Aorta (tissue), 5 donors: ENCODE measurements at regions of chr1 and their contacts with region 1.

Region 1: DNA sequence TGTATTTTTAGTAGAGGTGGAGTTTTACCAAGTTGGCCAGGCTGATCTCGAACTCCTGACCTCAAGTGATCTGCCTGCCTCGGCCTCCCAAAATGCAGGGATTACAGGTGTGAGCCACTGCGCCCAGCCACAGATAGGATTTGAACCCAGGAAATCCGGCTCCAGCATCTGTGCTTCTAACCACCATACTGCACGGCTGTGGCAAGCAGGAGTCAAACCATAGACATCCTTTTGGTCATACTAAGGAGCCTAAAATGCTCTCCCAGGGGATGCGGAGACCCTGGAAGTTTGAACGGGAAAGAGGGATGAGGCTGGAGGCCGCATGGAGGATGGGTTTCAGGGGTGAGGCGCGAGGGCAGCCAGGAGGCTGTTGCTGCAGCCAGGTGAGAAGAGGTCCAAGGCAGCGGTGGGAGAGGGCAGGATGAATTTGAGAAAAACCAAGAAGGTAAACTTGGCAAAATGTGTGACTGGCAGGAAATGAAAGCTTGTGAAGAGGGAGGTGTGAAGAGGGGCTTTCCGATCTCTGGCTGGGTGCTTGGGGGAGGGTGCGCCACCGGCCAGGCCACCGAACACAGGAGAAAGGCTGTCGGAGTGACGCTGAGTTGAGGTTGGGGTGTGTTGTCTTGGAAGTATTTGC is 24.0 kb upstream of the CDK18 start:
- DNase-seq: no peak
- ATAC-seq: no peak
- H3K4me3 ChIP-seq: no peak overlapping the region
- H3K27ac ChIP-seq: no peak overlapping the region
- H3K4me1 ChIP-seq: no peaks in the 10 kb centered on the region
- H3K27me3 ChIP-seq: peaks cover 0 to 2% of the 10 kb centered on the region in 2 donors

Region 2: GRCh38 chr1:205354259-205354904 is 126.1 kb before region 1 on chr1:
- intact Hi-C with region 1: loop called (anchors 1 to 5 kb)
- DNase-seq: peak; percentile 67 to 72
- ATAC-seq: peak; percentile 66
- H3K4me3 ChIP-seq: no peak overlapping the region
- H3K27ac ChIP-seq: no peak overlapping the region
- H3K4me1 ChIP-seq: no peaks in the 10 kb centered on the region
- H3K27me3 ChIP-seq: no peaks in the 10 kb centered on the region

Region 3: DNA sequence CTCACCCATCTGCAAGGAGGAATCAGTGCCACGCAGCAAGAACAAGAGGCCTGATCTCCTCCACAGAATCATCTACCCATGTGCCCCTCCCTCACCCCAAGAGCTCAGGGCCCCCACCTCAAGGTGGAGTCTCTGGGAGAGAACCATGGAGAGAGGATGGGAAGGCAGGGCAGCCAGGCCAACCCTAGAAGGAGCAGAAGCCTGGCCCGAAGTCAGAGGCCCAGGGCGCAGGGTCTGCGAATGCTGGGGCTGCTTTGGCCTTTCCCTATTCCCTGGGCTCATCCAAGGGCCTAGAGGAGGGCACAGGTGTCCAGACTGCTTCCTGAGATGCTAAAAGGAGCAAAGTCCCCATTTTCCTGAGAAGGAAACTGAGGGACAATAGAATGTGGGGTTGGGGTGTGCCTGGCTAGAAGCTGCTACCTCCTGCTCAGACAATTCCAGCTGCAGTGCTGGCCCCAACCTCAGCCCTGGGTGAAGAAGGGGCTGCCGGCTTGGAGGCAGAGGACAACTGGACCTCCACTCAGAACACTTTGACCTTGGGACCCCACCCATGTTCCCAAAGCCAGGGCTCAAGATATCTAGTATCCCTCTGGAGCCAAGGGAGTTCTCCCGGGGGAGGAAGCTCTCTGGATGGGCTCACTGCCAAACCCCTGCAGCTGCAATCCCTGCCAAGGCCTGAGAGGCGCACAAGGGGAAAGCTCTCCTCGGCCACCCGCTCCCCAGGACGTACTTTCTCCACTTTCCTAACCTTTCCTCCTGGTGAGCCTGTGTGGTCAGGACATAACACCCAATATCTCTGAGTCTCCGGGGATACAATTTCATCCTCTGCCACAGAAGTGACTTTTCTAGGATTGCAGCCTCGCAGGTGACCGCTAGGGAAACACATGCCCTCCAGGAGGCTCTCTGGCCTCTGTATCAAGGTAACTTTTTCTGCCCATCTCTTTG is 42.0 kb before region 1 on chr1:
- intact Hi-C with region 1: loop called in 1 of 2 experiments (anchors 5 kb)
- DNase-seq: peak; percentile 86 to 91
- ATAC-seq: peak; percentile 72
- H3K4me3 ChIP-seq: no peak overlapping the region
- H3K27ac ChIP-seq: no peak overlapping the region
- H3K4me1 ChIP-seq: no peaks in the 10 kb centered on the region
- H3K27me3 ChIP-seq: no peaks in the 10 kb centered on the region

Region 4: DNA sequence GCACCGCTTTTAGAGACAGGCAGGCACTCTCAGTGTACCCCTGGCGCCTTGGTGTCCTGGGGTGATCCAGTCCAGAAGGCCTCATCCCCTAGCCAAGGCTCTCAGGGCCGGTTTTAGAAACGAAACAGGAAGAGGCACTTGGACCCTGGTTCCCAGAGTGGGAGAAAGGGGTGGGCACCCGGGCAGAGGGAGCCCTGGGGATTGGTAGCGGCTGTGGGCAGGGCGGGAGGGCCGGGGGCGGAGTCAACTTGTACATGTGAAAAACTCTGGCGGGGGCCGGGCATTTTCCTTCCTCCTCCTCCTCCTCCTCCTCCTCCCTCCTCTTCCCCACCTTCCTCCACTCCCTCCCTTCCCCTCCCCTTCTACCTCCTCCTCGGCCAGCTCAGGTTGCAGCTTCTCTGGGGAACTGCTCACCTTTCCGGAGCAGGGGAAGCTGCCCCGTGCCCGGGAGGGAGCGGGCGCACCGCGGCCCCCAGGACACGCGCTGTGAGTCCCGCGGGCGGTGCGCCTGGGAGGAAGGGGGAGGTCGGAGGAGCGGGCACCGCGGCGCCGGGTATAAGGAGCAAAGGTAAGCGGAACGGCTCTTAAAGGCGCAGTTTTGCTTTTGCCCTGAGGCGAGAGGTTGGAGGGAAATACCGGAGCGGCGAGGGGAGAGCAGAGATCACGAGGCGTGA is 24.0 kb after region 1 on chr1 and contains the start of gene CDK18:
- intact Hi-C with region 1: no loop called
- DNase-seq: peak; percentile 91 to 92
- ATAC-seq: peak; percentile 70
- H3K4me3 ChIP-seq: peak within 1 kb of the TSS; percentile 38 to 85
- H3K27ac ChIP-seq: peak within 1 kb of the TSS in 1 of 2 donors; percentile 32
- H3K4me1 ChIP-seq: no peaks in the 10 kb centered on the region
- H3K27me3 ChIP-seq: no peaks in the 10 kb centered on the region
- total RNA-seq, gene CDK18: 47.1 to 80.7 TPM